Spleen (tissue), 13 donors: ENCODE measurements at regions of chr16 and their contacts with region 1.

Region 1: DNA sequence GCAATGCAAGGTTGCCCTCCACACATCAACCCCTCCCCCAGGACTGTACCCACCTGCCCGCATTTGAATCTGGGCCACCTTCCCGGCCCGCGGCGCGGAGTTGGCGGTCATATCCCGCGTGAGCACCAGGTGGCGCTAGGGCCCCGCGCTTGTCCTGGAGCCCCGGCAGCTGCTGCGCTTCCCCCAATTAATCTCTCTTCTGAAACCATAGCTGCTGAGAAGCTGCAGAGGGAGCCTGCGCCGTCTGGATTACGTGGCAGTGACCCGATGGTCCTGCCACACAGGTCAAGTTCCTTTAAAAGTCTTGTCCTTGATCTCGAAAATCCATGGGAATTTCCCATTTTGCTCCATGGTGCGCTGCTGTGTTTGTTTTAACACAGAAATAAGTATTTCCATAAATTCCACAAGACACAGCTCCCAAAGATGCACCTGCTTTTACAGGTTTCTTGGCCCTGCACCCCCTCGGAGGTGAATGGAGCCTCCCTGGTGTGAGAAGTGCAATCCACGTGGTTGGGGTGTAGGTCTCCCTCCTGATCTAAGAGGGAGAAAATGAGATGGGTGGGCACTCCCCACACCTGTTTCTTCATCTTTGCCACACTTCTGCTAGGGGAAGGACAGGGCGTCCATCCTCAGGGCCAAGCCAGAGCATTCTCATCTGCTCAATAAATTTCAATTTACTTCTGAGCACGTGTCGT is 22.1 kb downstream of the COX4I1 start:
- DNase-seq: peak; percentile 95
- H3K4me3 ChIP-seq: no peak overlapping the region
- H3K27ac ChIP-seq: no peak overlapping the region
- H3K4me1 ChIP-seq: peaks cover 8 to 23% (median 17%) of the 10 kb centered on the region in 6 donors
- H3K27me3 ChIP-seq: peaks cover 0 to 19% (median 0%) of the 10 kb centered on the region in 7 donors
- CTCF ChIP-seq: peak; percentile 93 to 98 (median 97)
- POLR2A ChIP-seq: no peak

Region 2: DNA sequence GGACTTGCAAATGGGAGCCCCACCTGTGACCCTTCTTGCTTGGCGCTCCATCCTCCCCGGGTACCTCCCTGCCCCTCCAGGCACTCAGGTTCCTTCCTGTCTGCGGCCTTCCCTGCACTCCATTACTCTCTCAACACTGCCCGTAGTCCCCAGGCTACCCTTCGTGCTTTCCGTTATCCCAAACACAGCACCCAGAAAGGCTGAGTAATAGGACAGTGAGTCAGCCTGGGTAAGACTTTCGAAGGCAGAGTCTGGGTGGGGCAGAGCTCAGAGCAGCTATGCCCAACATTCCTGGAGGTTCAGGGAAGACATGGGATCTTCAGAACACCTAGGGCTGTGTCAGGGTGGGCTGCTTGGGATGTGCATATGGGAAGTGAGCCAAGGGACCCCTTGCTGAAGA is 54.0 kb before region 1 on chr16:
- intact Hi-C with region 1: no loop called
- DNase-seq: no peak
- H3K4me3 ChIP-seq: no peak overlapping the region
- H3K27ac ChIP-seq: no peak overlapping the region
- H3K4me1 ChIP-seq: peaks cover 0 to 6% (median 0%) of the 10 kb centered on the region in 6 donors
- H3K27me3 ChIP-seq: peaks cover 0 to 6% (median 0%) of the 10 kb centered on the region in 7 donors
- CTCF ChIP-seq: no peak
- POLR2A ChIP-seq: no peak

Region 3: GRCh38 chr16:85898521-85899442 is 77.2 kb after region 1 on chr16 and contains the start of gene IRF8:
- intact Hi-C with region 1: loop called (anchors 10 kb)
- DNase-seq: peak; percentile 95
- H3K4me3 ChIP-seq: peak within 1 kb of the TSS; percentile 49 to 95 (median 70)
- H3K27ac ChIP-seq: peak within 1 kb of the TSS; percentile 80 to 93 (median 89)
- H3K4me1 ChIP-seq: peaks cover 11 to 74% (median 39%) of the 10 kb centered on the region in 6 donors
- H3K27me3 ChIP-seq: peaks cover 0 to 31% (median 9%) of the 10 kb centered on the region in 7 donors
- CTCF ChIP-seq: peak in 1 of 11 experiments; percentile 12
- POLR2A ChIP-seq: peak; percentile 89 to 97 (median 94)
- total RNA-seq, gene IRF8: 228 to 329 (median 278) TPM

Region 4: DNA sequence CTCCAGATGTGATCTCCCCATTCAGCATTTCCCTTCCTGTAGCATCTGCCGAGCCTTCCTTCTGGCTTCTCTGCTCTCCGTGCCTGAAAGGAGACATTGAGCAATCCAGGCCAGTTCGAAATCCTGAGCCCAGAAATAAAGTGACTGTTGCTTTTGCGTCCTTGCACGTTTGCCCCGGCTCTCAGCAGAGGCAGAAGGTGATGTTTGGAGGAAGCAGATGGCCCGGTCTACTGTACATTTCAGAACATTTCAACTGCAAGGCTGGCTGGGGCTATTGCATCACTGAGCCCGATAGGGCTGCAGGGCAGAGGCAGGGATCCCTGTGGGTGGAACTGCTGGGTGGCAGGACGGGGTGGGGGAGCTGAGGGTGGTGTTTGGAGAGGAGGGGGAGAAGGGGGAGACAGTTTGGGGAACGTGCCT is 106.8 kb after region 1 on chr16:
- intact Hi-C with region 1: no loop called
- DNase-seq: no peak
- H3K4me3 ChIP-seq: no peak overlapping the region
- H3K27ac ChIP-seq: peak overlapping the region in 3 of 8 donors; percentile 27 to 46 (median 32)
- H3K4me1 ChIP-seq: peaks cover 7 to 73% (median 41%) of the 10 kb centered on the region in 6 donors
- H3K27me3 ChIP-seq: peaks cover 0 to 17% (median 0%) of the 10 kb centered on the region in 7 donors
- CTCF ChIP-seq: no peak
- POLR2A ChIP-seq: no peak

Region 5: GRCh38 chr16:85986931-85987749 is 165.6 kb after region 1 on chr16:
- intact Hi-C with region 1: loop called (anchors 2 kb)
- DNase-seq: peak; percentile 73
- H3K4me3 ChIP-seq: peak overlapping the region in 1 of 8 donors; percentile 32
- H3K27ac ChIP-seq: peak overlapping the region in 2 of 8 donors; percentile 14 to 45
- H3K4me1 ChIP-seq: peaks cover 44 to 99% (median 82%) of the 10 kb centered on the region in 6 donors
- H3K27me3 ChIP-seq: peaks cover 0 to 17% (median 0%) of the 10 kb centered on the region in 7 donors
- CTCF ChIP-seq: peak in 7 of 11 experiments; percentile 35 to 79 (median 69)
- POLR2A ChIP-seq: no peak

Region 6: GRCh38 chr16:86016201-86016871 is 194.7 kb after region 1 on chr16:
- intact Hi-C with region 1: loop called (anchors 2 kb)
- DNase-seq: no peak
- H3K4me3 ChIP-seq: no peak overlapping the region
- H3K27ac ChIP-seq: no peak overlapping the region
- H3K4me1 ChIP-seq: peaks cover 0 to 37% (median 26%) of the 10 kb centered on the region in 6 donors
- H3K27me3 ChIP-seq: peaks cover 0 to 29% (median 7%) of the 10 kb centered on the region in 7 donors
- CTCF ChIP-seq: peak; percentile 37 to 81 (median 66)
- POLR2A ChIP-seq: no peak

Region 7: DNA sequence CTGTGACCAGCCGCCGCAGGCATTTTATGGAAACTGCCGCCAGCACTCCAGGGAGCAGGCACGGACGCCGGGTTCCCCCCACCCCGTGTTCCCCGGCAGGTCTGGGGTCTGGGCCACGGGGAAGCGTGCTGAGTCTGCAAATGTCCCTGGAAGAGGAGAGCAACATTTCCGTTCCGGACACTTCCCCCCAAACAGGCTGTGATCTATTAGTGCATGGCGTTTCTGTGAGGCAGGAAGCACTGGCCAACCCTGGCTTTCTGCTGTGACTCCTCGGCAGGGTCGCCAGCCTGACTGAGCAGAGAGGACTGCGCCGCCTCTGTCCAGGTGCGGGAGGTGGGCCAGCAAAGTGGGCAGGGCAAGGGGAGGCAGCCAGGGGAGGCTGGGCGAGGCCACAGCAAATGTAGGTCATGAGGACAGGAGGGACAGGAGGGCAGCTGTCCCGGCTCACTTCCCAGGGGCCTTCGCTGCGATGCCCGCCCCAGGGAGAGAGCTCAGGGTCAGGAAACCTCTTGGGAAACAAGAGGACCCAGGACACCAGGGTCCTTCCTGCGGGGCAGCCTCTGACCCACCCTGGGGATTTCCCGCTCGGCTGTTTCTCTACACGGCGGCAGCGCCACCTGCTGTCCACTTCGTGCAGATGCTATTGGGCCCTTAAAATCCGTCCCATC is 698.2 kb after region 1 on chr16:
- intact Hi-C with region 1: loop called (anchors 5 kb)
- DNase-seq: peak; percentile 85
- H3K4me3 ChIP-seq: peak overlapping the region in 2 of 8 donors; percentile 15 to 53
- H3K27ac ChIP-seq: no peak overlapping the region
- H3K4me1 ChIP-seq: peaks cover 10 to 31% (median 19%) of the 10 kb centered on the region in 6 donors
- H3K27me3 ChIP-seq: peaks cover 0 to 92% (median 63%) of the 10 kb centered on the region in 7 donors
- CTCF ChIP-seq: peak; percentile 39 to 91 (median 80)
- POLR2A ChIP-seq: no peak